ENCODE measurements at regions of chr20 and their contacts with region 1.

Region 1: DNA sequence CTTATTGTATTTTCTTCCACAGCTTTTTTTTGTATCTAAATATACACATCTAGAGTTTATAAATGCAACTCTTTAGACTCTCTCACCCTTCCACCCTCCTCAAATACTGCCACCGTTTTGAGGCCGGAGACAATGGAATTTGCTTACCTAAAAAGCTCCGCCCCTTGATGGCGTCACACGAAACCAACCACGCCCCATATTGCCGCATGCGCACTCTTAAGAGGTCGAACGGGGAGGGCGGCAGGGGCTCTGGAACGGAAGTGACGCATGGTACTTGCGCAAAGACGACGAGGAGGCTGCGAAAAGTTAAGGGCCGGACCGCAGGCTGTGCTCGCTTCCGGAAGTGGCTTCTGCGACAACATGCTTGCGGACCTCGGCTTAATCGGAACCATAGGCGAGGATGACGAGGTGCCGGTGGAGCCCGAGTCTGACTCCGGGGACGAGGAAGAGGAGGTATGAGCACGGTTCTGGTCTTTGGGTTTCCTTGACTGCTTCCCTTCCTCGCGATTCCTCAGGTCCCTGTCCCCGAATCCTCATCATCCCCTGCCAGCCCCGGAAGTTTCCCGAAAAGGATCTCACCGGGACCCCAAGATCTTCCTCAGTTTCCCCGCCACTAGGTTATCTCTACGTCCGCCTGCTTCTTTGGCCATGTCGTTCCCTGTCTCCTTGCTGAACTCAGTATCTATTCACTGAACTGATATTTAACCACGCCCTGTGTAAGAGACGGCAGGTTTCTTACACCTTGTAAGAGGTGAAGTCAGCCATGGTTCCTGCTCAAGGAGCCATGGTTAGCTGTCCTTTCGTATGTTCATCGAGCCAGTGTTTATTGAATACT is at the start of gene DDX27:
- DNase-seq: peak; percentile 86 to 99
- ATAC-seq: peak; percentile 89 to 96
- H3K4me3 ChIP-seq: peak within 1 kb of the TSS; percentile 97
- H3K27ac ChIP-seq: peak within 1 kb of the TSS; percentile 91 to 92
- H3K4me1 ChIP-seq: peaks cover 14% of the 10 kb centered on the region
- CTCF ChIP-seq: no peak
- EP300 ChIP-seq: no peak
- POLR2A ChIP-seq: peak; percentile 95
- RAD21 ChIP-seq: no peak
- polyA plus RNA-seq, gene DDX27: 60.2 and 69.3 TPM in 2 replicates

Region 2: GRCh38 chr20:48928832-48929725 is 290.2 kb before region 1 on chr20:
- CTCF ChIA-PET with region 1: no interaction called
- POLR2A ChIA-PET with region 1: no interaction called
- DNase-seq: no peak
- ATAC-seq: no peak
- H3K4me3 ChIP-seq: no peak overlapping the region
- H3K27ac ChIP-seq: no peak overlapping the region
- H3K4me1 ChIP-seq: no peaks in the 10 kb centered on the region
- CTCF ChIP-seq: no peak
- EP300 ChIP-seq: no peak
- POLR2A ChIP-seq: no peak
- RAD21 ChIP-seq: no peak

Region 3: GRCh38 chr20:49037962-49038387 is 181.3 kb before region 1 on chr20:
- CTCF ChIA-PET with region 1: no interaction called
- POLR2A ChIA-PET with region 1: no interaction called
- DNase-seq: no peak
- ATAC-seq: no peak
- H3K4me3 ChIP-seq: no peak overlapping the region
- H3K27ac ChIP-seq: no peak overlapping the region
- H3K4me1 ChIP-seq: no peaks in the 10 kb centered on the region
- CTCF ChIP-seq: no peak
- EP300 ChIP-seq: no peak
- POLR2A ChIP-seq: no peak
- RAD21 ChIP-seq: no peak

Region 4: DNA sequence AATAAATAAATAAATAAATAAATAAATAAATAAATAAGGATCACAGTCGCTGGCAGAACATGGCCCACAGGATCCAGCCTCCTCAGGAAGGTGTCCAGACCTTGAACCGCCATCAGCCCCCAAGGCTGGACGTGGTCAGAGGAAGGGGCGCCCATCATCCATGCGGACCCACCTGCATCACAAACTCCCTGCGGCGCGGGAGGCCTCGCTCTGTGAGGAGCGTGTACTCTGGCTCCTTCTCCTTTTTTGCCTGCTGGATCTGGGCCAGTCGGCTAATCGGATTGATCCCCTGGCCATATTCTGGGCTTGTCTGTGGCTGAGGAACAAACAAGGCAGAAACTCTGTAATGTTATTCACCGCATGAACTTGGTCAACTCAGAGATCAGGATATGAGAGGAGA is 96.4 kb before region 1 on chr20:
- CTCF ChIA-PET with region 1: interaction called, 29 read pairs
- POLR2A ChIA-PET with region 1: no interaction called
- DNase-seq: no peak
- ATAC-seq: no peak
- H3K4me3 ChIP-seq: no peak overlapping the region
- H3K27ac ChIP-seq: no peak overlapping the region
- H3K4me1 ChIP-seq: no peaks in the 10 kb centered on the region
- CTCF ChIP-seq: no peak
- EP300 ChIP-seq: no peak
- POLR2A ChIP-seq: no peak
- RAD21 ChIP-seq: no peak

Region 5: DNA sequence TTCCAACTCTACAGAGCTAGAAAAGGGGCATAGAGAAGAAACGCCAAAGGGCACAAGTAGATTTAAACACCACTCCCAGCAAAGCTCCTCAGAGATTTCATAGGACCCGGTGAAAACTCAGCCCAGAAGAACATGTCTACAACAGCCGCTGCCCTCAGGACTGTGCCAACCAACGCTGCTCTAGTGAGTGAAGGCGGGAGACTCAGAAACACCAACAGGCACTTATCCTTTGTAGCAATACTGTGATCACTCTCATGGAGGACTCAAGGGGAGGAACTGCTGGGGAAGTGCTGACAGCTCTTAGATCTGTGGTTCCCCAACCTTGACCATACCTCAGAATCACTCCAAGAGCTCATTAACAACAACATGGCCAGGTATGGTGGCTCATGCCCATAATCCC is 70.7 kb before region 1 on chr20:
- CTCF ChIA-PET with region 1: interaction called, 45 read pairs
- POLR2A ChIA-PET with region 1: interaction called, 3 read pairs
- DNase-seq: no peak
- ATAC-seq: no peak
- H3K4me3 ChIP-seq: no peak overlapping the region
- H3K27ac ChIP-seq: no peak overlapping the region
- H3K4me1 ChIP-seq: no peaks in the 10 kb centered on the region
- CTCF ChIP-seq: no peak
- EP300 ChIP-seq: no peak
- POLR2A ChIP-seq: no peak
- RAD21 ChIP-seq: no peak

Region 6: DNA sequence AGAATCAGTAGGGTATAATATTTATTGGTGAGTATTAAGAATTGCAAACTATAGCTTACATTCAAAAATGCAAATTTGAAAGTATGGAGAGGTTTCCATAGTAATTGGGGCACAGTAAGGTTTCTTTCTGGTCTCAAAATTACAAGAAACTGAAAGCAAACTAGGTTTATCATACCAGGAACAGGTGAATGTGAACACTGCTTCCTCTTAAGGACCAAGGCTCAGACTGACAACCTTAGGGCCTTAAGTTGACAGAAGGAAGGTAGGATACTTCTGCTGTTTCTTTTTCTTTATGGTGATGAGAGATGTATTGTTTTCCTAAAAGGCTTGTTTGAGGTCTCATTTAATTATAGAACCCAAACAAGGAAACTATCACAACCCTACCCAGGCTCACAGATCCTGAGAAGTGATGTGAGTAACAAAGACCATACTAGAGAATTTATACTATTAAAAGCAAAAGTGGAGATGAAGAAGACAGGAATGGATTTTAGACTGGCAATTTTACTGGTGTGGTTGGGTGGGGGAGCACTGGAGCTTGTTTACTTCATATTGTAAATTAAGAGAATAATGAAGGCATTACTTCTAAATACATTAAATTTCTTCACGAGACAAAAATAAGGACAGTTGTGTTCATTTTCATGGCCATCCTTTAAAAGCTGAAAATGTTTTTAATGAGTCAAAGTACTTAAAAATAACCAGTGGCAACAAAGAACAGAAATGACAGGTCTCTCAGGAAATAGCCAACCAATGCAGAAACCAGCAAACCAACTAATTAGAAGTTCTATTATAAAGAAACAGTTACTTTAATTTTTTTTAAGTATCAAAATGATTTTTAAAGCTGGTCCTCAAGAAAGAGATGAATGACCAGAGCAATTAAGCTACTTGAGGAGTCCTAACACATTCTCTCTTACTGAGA is 52.5 kb before region 1 on chr20:
- CTCF ChIA-PET with region 1: interaction called, 23 read pairs
- POLR2A ChIA-PET with region 1: no interaction called
- DNase-seq: no peak
- ATAC-seq: no peak
- H3K4me3 ChIP-seq: no peak overlapping the region
- H3K27ac ChIP-seq: no peak overlapping the region
- H3K4me1 ChIP-seq: peaks cover 13% of the 10 kb centered on the region
- CTCF ChIP-seq: no peak
- EP300 ChIP-seq: no peak
- POLR2A ChIP-seq: no peak
- RAD21 ChIP-seq: no peak

Region 7: GRCh38 chr20:49186535-49187329 is 32.6 kb before region 1 on chr20:
- CTCF ChIA-PET with region 1: interaction called, 47 read pairs
- POLR2A ChIA-PET with region 1: interaction called, 12 read pairs
- DNase-seq: peak; percentile 44 to 52
- ATAC-seq: peak; percentile 26 to 30; a peak in 5 of 6 replicates
- H3K4me3 ChIP-seq: peak overlapping the region; percentile 93
- H3K27ac ChIP-seq: peak overlapping the region; percentile 98 to 99
- H3K4me1 ChIP-seq: peaks cover 40% of the 10 kb centered on the region
- CTCF ChIP-seq: no peak
- EP300 ChIP-seq: no peak
- POLR2A ChIP-seq: no peak
- RAD21 ChIP-seq: no peak

Region 8: GRCh38 chr20:49231471-49231870 is 12.2 kb after region 1 on chr20:
- CTCF ChIA-PET with region 1: interaction called, 16 read pairs
- POLR2A ChIA-PET with region 1: interaction called, 4 read pairs
- DNase-seq: no peak
- ATAC-seq: no peak
- H3K4me3 ChIP-seq: no peak overlapping the region
- H3K27ac ChIP-seq: no peak overlapping the region
- H3K4me1 ChIP-seq: no peaks in the 10 kb centered on the region
- CTCF ChIP-seq: no peak
- EP300 ChIP-seq: no peak
- POLR2A ChIP-seq: no peak
- RAD21 ChIP-seq: no peak

Region 9: DNA sequence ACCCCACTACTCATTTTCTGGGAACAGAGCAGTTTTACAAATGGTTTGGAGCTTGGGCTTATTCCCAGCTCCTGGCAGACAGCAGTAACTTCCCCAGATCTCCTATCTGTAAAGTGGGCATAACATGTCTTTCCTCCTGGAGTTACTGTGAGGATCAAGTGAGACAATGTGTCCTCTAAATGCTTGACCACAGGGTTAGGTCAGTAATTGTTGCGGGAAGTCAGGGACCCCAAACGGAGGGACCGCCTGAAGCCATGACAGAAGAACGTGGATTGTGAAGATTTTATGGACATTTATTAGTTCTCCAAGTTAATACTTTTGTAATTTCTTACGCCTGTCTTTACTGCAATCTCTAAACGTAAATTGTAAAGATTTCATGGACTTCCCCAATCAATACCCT is 73.8 kb after region 1 on chr20:
- CTCF ChIA-PET with region 1: no interaction called
- POLR2A ChIA-PET with region 1: no interaction called
- DNase-seq: no peak
- ATAC-seq: no peak
- H3K4me3 ChIP-seq: no peak overlapping the region
- H3K27ac ChIP-seq: no peak overlapping the region
- H3K4me1 ChIP-seq: peaks cover 15% of the 10 kb centered on the region; the same call in 2 of the 3 replicates
- CTCF ChIP-seq: no peak
- EP300 ChIP-seq: no peak
- POLR2A ChIP-seq: no peak
- RAD21 ChIP-seq: no peak

Region 10: GRCh38 chr20:49562311-49563014 is 343.2 kb after region 1 on chr20:
- CTCF ChIA-PET with region 1: no interaction called
- POLR2A ChIA-PET with region 1: no interaction called
- DNase-seq: peak in 1 of 2 experiments; percentile 27
- ATAC-seq: peak; percentile 46 to 75; a peak in 4 of 6 replicates
- H3K4me3 ChIP-seq: no peak overlapping the region
- H3K27ac ChIP-seq: peak overlapping the region in 1 of 2 experiments; percentile 71; a peak in 3 of 6 replicates
- H3K4me1 ChIP-seq: peaks cover 17% of the 10 kb centered on the region
- CTCF ChIP-seq: no peak
- EP300 ChIP-seq: no peak
- POLR2A ChIP-seq: no peak
- RAD21 ChIP-seq: no peak